Activated CD4-positive, alpha-beta memory T cell treated with anti-CD3 and anti-CD28 coated beads for 36 hours (primary cell): ENCODE measurements at regions of chr10 and their contacts with region 1.

Region 1: DNA sequence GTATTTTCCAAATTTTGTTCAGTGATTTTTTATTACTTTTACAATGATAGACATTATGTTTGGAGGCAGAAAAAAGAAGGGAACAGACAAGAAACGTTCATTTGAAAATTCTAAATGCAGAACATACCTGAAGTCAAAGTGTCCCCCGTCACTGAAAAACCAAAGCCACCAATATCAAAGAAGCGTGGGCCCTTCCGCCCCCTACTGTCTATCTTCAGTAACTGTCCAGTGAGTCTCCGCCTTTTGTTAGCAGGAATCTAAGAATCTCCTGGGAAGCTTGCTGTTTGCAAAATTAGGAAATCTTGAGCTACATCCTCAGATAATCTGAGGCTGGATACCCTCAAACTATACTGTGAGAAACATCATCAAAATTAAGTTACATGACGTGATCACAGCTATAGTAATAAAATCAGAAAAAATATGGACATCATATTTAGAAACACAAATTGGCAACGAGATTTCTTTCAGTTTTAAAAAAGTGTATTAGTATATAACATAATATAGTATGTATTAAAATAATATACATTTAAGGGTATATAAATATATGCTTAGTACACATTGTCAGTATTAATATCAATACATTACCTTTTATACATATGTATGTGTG is 169.3 kb upstream of the AKR1E2 start:
- DNase-seq: peak; percentile 63
- H3K4me3 Mint-ChIP-seq: no peak overlapping the region
- H3K27ac Mint-ChIP-seq: no peak overlapping the region
- H3K4me1 Mint-ChIP-seq: peaks cover 16% of the 10 kb centered on the region
- H3K27me3 Mint-ChIP-seq: peaks cover 6% of the 10 kb centered on the region

Region 2: DNA sequence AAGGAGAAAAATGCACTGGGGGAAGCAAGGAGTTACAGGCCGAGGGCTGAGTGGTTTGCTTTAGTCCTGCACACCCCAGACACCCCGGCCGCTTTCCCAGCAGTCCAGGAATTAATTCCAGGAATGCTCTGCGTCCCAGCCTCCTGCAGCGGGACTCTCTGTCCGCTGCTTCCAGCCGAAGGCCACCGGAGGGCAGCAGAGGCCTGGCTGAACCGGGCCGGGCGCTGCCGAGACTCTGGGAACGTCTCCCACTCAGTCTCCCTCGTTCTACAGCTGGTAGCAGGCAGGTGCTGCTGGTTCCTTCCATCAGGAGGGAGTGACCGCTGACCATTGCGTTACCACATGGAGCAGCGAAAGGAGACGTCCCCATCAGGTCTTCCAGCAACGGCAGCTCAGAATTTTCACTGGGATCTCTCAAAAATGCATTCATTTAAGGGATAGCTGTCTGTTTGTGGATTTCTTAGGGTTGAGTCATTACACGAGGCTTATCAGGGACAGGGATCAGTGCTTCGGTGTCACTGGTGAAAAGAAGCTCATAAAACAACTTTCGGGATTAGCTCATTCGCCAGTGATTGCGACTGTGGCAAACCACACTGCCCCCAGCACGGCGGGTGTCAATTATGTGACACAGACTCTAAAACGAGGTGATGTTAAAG is 1459.2 kb before region 1 on chr10:
- CTCF ChIA-PET with region 1: interaction called, 7 read pairs
- POLR2A ChIA-PET with region 1: no interaction called
- intact Hi-C with region 1: loop called (anchors 10 kb)
- DNase-seq: peak; percentile 94
- H3K4me3 Mint-ChIP-seq: no peak overlapping the region
- H3K27ac Mint-ChIP-seq: no peak overlapping the region
- H3K4me1 Mint-ChIP-seq: peaks cover 11% of the 10 kb centered on the region
- H3K27me3 Mint-ChIP-seq: peaks cover 70% of the 10 kb centered on the region

Region 3: DNA sequence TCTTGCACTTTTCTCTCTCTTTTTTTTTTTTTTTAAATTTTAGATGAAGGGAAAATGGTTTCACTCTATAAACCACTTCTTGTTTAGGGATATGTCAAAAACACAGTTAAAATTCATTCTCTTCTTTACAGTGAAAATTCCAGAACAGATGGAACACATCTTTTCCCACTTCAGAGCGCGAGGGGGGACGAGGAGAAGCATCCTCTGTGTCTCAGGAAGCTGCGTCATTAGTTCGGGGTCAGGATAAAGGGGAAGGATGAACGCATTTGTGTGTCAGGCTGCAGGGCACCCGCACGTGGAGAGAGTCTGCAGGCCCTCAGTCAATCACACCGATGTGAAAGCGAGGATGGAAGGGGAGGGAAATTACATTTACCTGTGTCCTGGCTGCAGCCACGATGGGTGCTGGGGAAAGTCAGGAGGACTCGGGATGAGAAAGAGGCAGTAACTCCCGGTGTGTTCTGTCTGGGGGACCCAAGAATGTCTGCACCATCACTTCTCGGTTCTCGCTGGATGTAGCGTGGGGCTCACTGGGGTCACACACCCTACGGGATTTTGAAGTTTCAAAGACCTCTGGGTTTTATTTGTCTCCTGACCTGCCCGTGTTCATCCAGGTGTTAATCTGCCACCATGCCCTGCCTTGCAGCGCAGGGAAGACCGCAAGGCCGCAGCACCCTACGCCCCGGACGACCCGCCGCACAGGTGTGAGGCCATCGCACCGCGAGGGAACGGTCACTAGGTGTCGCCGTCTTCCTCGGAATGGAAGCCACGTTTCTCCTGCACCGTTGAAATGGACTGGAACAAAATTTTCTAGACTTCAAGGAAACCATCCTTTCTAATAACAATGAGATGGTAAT is 1417.4 kb before region 1 on chr10:
- CTCF ChIA-PET with region 1: interaction called, 3 read pairs
- POLR2A ChIA-PET with region 1: no interaction called
- intact Hi-C with region 1: loop called (anchors 1 kb)
- DNase-seq: peak; percentile 81
- H3K4me3 Mint-ChIP-seq: no peak overlapping the region
- H3K27ac Mint-ChIP-seq: no peak overlapping the region
- H3K4me1 Mint-ChIP-seq: peaks cover 3% of the 10 kb centered on the region
- H3K27me3 Mint-ChIP-seq: peaks cover 32% of the 10 kb centered on the region

Region 4: GRCh38 chr10:3852147-3852904 is 804.4 kb before region 1 on chr10:
- CTCF ChIA-PET with region 1: no interaction called
- POLR2A ChIA-PET with region 1: no interaction called
- intact Hi-C with region 1: loop called (anchors 1 kb)
- DNase-seq: peak; percentile 86
- H3K4me3 Mint-ChIP-seq: peak overlapping the region; percentile 36
- H3K27ac Mint-ChIP-seq: peak overlapping the region; percentile 92
- H3K4me1 Mint-ChIP-seq: peaks cover 53% of the 10 kb centered on the region
- H3K27me3 Mint-ChIP-seq: no peaks in the 10 kb centered on the region

Region 5: GRCh38 chr10:4034907-4035598 is 621.6 kb before region 1 on chr10:
- CTCF ChIA-PET with region 1: interaction called, 3 read pairs
- POLR2A ChIA-PET with region 1: no interaction called
- intact Hi-C with region 1: loop called (anchors 1 kb)
- DNase-seq: peak; percentile 48
- H3K4me3 Mint-ChIP-seq: peak overlapping the region; percentile 2
- H3K27ac Mint-ChIP-seq: peak overlapping the region; percentile 32
- H3K4me1 Mint-ChIP-seq: peaks cover 33% of the 10 kb centered on the region
- H3K27me3 Mint-ChIP-seq: no peaks in the 10 kb centered on the region

Region 6: DNA sequence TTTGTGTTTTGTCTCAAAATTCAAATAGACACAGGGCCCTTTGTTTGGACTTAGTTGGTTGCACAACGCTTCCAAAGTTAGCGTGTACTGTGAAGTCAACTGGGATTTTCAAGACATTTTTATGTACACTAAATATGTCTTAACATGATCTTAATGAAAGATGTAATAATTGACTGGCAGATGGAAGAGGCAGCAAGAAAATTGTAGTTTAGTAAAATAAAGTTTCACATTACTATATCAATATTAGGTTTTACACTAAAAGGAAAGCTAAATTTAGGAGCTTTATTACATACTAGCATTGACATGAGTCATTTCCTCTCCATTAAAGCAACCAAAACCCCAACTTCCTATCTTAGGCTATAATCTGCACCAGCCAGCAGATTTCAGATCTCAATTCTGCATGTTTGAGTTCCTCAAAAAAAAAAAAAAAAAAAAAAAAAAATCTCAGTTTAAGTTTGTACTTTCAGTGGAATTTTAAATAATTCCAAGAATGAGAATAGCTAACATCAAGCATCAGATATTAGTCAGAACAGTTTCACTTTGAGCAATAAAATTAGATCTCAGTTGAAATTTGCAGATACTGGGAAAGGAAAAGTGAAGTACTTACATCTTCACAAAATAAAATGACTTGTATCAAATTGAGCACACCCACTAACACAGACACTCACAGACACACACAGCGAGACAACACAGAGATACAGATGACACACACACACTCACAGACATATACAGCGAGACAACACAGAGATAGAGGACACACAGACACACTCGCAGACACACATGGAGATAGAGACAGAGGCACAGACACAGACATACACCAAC is 525.1 kb before region 1 on chr10:
- CTCF ChIA-PET with region 1: no interaction called
- POLR2A ChIA-PET with region 1: no interaction called
- intact Hi-C with region 1: loop called (anchors 2 kb)
- DNase-seq: peak; percentile 42
- H3K4me3 Mint-ChIP-seq: no peak overlapping the region
- H3K27ac Mint-ChIP-seq: no peak overlapping the region
- H3K4me1 Mint-ChIP-seq: peaks cover 39% of the 10 kb centered on the region
- H3K27me3 Mint-ChIP-seq: no peaks in the 10 kb centered on the region

Region 7: DNA sequence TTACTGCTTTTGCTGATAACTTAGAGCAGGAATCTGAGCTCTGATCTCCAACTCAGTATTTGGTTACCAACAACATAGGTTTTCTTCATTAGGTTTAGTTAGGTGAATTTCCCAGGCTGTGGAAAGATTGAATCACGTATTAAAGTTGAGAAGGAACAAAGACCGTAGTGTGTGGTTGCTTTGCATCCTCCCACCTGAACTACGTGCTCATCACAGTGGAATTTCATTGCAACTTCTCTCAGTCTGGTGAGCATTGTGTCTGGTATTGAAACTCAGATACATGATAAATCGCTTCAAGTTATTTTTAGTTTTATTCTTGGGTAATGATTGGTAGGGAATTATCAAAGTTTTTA is 29.9 kb after region 1 on chr10:
- CTCF ChIA-PET with region 1: no interaction called
- POLR2A ChIA-PET with region 1: interaction called, 4 read pairs
- intact Hi-C with region 1: loop called (anchors 1 kb)
- DNase-seq: peak; percentile 43
- H3K4me3 Mint-ChIP-seq: no peak overlapping the region
- H3K27ac Mint-ChIP-seq: no peak overlapping the region
- H3K4me1 Mint-ChIP-seq: peaks cover 36% of the 10 kb centered on the region
- H3K27me3 Mint-ChIP-seq: no peaks in the 10 kb centered on the region